ENCODE measurements at regions of chr14 and their contacts with region 1.

Region 1: GRCh38 chr14:104976198-104977007 is 1.8 kb downstream of the AHNAK2 start:
- DNase-seq: peak; percentile 86 to 94 (median 90)
- H3K4me3 ChIP-seq: no peak overlapping the region
- H3K27ac ChIP-seq: no peak overlapping the region
- H3K4me1 ChIP-seq: peaks cover 20 to 41% of the 10 kb centered on the region in 2 donors
- H3K27me3 ChIP-seq: no peaks in the 10 kb centered on the region
- CTCF ChIP-seq: peak; percentile 93 to 98 (median 96)
- POLR2A ChIP-seq: no peak

Region 2: GRCh38 chr14:104932676-104933631 is 43.4 kb before region 1 on chr14:
- intact Hi-C with region 1: loop called in 1 of 2 experiments (anchors 5 kb)
- DNase-seq: peak; percentile 71 to 84 (median 78)
- H3K4me3 ChIP-seq: peak overlapping the region in 2 of 4 donors; percentile 37 to 84
- H3K27ac ChIP-seq: peak overlapping the region in 1 of 5 donors; percentile 61
- H3K4me1 ChIP-seq: peaks cover 0 to 9% of the 10 kb centered on the region in 2 donors
- H3K27me3 ChIP-seq: peaks cover 5% of the 10 kb centered on the region
- CTCF ChIP-seq: peak; percentile 32 to 81 (median 63)
- POLR2A ChIP-seq: no peak

Region 3: DNA sequence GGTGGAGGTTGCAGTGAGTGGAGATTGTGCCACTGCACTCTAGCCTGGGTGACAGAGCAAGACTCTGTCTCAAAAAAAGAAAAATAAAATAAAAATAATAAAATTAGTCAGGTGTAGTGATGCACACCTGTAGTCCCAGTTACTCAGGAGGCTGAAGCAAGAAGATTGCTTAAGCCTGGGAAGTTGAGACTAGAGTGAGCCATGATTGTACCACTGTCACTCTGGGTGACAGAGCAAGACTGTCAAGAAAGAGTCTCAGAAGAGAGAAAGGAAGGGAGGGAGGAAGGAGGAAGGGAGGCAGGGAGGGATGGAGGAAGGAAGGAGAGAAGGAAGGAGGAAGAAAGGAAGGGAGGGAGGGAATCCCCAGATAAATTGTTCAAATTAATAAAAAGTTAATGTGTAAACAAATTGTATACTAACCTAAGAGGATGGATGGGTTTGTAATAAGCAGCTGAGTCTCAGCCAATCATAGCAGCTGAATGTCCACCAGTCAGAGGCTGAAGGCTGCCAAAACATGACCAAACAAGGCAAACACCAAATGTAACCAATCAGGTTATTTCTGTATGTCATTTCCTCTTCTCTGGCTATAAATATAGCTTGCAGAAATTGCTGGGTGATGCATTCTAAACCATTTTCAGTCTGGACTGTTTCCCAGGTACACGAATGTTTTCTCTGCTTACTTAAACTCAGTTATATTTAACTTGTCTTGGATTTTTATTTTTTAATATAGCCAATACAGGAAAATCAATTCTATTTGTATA is 50.6 kb after region 1 on chr14:
- intact Hi-C with region 1: loop called in 1 of 2 experiments (anchors 5 kb)
- DNase-seq: no peak
- H3K4me3 ChIP-seq: no peak overlapping the region
- H3K27ac ChIP-seq: no peak overlapping the region
- H3K4me1 ChIP-seq: peaks cover 10 to 19% of the 10 kb centered on the region in 2 donors
- H3K27me3 ChIP-seq: no peaks in the 10 kb centered on the region
- CTCF ChIP-seq: no peak
- POLR2A ChIP-seq: no peak

Region 4: DNA sequence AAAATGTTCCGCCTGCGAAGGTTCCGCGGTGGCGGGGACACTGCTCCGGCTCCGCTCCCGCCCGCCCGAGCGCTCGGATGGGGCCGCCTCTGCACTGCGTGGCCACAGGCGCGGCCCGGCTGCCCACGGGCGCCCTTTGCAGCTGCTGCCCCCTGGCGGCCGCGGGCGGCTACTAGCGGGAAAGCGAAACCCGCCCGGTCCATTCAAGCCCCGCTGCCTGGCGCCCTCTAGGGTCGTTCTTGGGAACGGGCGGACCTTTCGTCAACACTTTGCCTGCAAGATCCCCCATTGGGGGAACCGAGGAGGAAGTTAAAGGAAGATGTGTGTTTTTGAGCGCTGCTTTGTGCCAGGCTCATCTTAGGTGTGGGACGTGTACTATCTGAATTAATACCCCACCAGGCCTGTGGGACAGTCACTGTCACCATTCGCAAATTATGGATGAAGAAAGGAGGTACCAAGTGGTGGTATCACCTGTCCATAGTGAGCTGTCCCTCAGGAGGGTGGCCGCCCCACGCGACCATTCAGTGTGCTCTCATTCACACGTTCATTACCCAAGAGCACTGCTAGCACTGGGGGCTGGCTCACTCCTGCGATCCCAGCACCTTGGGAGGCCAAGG is 69.4 kb after region 1 on chr14:
- intact Hi-C with region 1: loop called (anchors 2 to 5 kb)
- DNase-seq: peak; percentile 84 to 94 (median 90)
- H3K4me3 ChIP-seq: no peak overlapping the region
- H3K27ac ChIP-seq: no peak overlapping the region
- H3K4me1 ChIP-seq: no peaks in the 10 kb centered on the region
- H3K27me3 ChIP-seq: peaks cover 10% of the 10 kb centered on the region
- CTCF ChIP-seq: peak; percentile 93 to 100 (median 100)
- POLR2A ChIP-seq: peak in 1 of 2 donors; percentile 11

Measured in adrenal gland (tissue), 19 donors.